ENCODE measurements at regions of chr11 and their contacts with region 1.

Region 1: DNA sequence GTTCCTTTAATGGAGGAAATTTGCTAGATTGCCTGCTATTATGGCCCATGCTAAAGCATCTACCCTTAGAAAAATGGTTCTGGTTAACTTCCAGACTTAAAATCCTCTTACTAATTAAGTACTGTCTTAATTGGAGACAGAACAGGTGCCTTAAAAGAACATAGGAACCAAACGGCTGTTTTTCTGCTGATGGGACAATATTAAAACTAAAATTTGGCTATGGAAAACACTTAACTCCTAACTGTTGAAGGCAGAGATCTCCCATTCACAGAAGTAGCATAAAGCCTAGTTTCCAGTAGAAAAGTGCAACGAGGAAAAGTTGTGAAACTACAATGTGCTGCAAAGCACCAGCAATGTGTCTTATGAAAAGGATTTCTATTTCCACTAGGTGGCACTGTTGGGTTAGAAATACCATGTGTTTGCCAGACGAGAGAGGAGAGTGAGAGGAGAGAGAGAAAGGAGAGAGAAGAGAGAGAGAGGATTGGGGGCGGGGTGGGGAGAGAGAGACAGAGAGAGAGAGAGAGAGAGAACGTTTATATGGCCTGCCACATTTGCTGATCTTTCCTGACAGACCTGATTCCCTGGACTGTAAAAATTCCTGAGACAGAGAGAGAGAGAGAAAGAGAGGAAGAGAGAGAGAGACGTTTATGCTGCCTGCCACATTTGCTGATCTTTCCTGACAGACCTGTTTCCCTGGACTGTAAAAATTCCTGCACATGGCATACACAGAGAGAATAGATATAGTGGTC is 51.5 kb downstream of the FAM181B start:
- DNase-seq: peak; percentile 66 to 77
- H3K4me3 ChIP-seq: no peak overlapping the region
- H3K4me1 ChIP-seq: peaks cover 18% of the 10 kb centered on the region
- H3K27me3 ChIP-seq: peaks cover 2% of the 10 kb centered on the region; the same call in 1 of the 2 replicates

Region 2: GRCh38 chr11:81644239-81644840 is 1037.8 kb before region 1 on chr11:
- in situ Hi-C with region 1: loop called (anchors 25 kb)
- DNase-seq: peak; percentile 41 to 61
- H3K4me3 ChIP-seq: no peak overlapping the region
- H3K4me1 ChIP-seq: no peaks in the 10 kb centered on the region
- H3K27me3 ChIP-seq: peaks cover 9% of the 10 kb centered on the region

Region 3: GRCh38 chr11:82315093-82315492 is 367.1 kb before region 1 on chr11:
- in situ Hi-C with region 1: loop called (anchors 25 kb)
- DNase-seq: peak; percentile 4 to 48
- H3K4me3 ChIP-seq: no peak overlapping the region
- H3K4me1 ChIP-seq: no peaks in the 10 kb centered on the region
- H3K27me3 ChIP-seq: no peaks in the 10 kb centered on the region